ENCODE measurements at regions of chr7 and their contacts with region 1.

Region 1: DNA sequence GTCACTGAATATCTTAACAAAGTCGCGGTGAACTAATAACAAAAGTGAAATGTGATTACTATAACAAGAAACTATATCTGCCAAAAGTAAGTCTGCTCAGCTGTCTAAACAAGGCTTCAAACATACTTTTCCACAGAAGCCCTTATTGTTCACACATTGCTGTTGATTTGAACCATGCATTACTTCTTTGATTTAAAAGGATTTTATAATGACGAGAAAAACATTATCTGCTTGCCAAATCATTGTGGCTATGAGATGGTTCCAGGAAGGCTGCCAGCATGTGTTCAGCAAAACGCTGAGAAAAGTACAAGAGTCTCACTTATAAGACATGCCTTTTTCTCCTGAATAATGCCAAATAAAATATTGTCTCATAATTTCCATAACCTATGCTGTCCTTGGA is 24.4 kb downstream of the RNF133 start:
- DNase-seq: no peak
- H3K4me3 Mint-ChIP-seq: no peak overlapping the region
- H3K27ac Mint-ChIP-seq: no peak overlapping the region
- H3K4me1 Mint-ChIP-seq: peaks cover 58% of the 10 kb centered on the region
- H3K27me3 Mint-ChIP-seq: no peaks in the 10 kb centered on the region
- CTCF ChIP-seq: no peak

Region 2: DNA sequence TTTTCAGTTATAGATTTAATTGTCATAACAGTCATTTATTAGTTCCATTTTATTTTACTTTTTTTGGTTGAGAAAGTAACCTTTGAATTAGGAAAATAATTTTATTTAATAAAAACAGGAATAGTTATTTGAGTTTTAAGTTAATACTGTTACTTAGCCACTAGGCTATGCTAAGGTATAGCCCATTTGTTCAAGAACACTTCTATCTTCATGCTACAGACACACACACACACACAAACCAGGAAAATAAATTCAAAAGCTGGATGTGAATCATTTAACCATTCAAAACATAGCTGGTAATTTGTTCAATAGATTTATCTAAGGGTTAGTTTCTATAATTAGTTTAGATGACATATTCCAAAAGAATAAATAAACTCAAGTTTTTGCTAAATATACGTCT is 124.0 kb before region 1 on chr7:
- CTCF ChIA-PET with region 1: no interaction called
- intact Hi-C with region 1: loop called (anchors 10 kb)
- DNase-seq: no peak
- H3K4me3 Mint-ChIP-seq: no peak overlapping the region
- H3K27ac Mint-ChIP-seq: no peak overlapping the region
- H3K4me1 Mint-ChIP-seq: no peaks in the 10 kb centered on the region
- H3K27me3 Mint-ChIP-seq: no peaks in the 10 kb centered on the region
- CTCF ChIP-seq: no peak

Region 3: GRCh38 chr7:122604260-122604659 is 70.2 kb before region 1 on chr7:
- CTCF ChIA-PET with region 1: no interaction called
- intact Hi-C with region 1: no loop called
- DNase-seq: no peak
- H3K4me3 Mint-ChIP-seq: no peak overlapping the region
- H3K27ac Mint-ChIP-seq: no peak overlapping the region
- H3K4me1 Mint-ChIP-seq: no peaks in the 10 kb centered on the region
- H3K27me3 Mint-ChIP-seq: no peaks in the 10 kb centered on the region
- CTCF ChIP-seq: no peak

Region 4: DNA sequence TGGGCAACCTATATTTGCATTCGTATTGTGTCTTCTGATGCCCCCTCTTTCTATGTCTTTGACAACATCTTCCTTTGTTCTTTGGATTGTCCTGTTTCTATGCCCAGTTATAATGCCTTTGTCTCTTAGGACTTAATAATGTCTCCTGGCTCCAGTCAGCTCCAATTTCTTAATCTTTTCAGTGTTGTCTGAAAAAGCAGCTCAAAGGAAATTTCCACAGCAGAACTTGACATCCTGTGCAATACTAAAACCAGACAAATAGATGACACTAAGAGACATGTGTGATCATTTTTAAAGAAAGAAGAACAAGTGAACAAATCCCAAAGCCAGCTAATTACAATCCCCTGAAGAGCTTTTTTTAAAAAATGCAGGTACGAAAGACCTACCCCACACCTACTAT is 75.9 kb after region 1 on chr7:
- CTCF ChIA-PET with region 1: no interaction called
- intact Hi-C with region 1: loop called (anchors 5 kb)
- DNase-seq: no peak
- H3K4me3 Mint-ChIP-seq: no peak overlapping the region
- H3K27ac Mint-ChIP-seq: no peak overlapping the region
- H3K4me1 Mint-ChIP-seq: peaks cover 17% of the 10 kb centered on the region
- H3K27me3 Mint-ChIP-seq: no peaks in the 10 kb centered on the region
- CTCF ChIP-seq: no peak

Region 5: DNA sequence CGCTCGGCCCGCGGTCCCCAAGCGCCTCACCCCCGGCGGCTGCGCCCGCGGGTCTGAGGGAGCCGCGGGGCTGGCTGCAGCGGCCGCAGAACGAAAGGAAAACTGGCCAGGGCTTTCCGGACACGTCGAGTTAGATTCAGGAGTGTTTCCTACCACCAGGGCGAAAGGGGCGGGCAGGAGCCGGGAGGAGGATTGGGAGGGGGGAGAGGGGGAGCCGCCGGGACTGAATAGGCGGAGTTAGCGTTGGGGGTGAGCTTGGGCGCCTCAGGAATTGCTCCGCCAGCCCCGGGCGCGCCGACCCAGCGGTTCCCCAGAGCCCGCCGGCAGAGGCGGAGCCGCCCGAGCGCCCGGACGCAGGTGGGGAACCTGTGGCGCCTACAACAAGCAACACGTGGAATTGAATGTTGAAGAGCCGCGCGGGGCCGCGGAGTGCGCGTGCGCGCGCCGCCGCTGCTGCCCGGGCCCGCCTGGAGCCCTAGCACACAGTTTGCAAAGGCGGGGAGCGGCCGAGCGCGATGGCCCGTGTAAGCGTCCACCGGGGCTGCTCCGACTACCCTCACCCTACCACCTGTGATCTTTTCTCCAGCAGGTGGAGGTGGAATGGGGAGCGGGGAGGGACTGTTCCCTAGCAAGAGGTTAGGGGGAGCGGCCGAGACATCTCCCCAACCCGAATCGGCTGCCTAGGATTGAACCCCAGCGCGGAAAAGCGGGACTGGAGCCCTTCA is 212.0 kb after region 1 on chr7 and contains the start of gene CADPS2:
- CTCF ChIA-PET with region 1: no interaction called
- intact Hi-C with region 1: loop called (anchors 5 kb)
- DNase-seq: peak; percentile 91
- H3K4me3 Mint-ChIP-seq: peak within 1 kb of the TSS; percentile 95
- H3K27ac Mint-ChIP-seq: peak within 1 kb of the TSS; percentile 81
- H3K4me1 Mint-ChIP-seq: peaks cover 18% of the 10 kb centered on the region
- H3K27me3 Mint-ChIP-seq: no peaks in the 10 kb centered on the region
- CTCF ChIP-seq: no peak
- total RNA-seq, gene CADPS2: 14.1 and 16.4 TPM in 2 replicates